Mammary epithelial cell (primary cell): ENCODE measurements at regions of chr4 and their contacts with region 1.

Region 1: DNA sequence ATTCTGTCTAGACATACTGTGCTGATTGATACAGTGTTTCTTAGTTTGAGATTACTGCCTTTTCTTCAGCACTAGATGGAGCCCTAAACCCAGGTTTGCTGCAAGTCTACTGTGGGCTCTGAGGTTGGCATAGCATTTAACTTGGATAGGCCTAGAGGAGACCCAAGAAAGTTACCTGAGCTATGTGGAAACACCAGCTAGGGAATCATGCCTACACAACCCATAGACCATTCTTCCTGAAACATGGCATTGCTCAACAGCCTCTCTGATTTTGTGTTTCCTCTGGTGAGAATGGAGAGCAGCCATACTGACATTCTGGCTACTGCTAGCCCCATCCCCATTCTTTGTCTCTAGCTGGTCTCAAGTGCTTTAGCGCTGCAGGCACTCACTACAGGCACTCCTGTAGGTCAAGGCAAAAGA is 287.7 kb upstream of the PCDH18 start:
- DNase-seq: peak; percentile 57
- H3K4me3 ChIP-seq: no peak overlapping the region
- H3K27ac ChIP-seq: no peak overlapping the region
- H3K4me1 ChIP-seq: peaks cover 3% of the 10 kb centered on the region
- H3K27me3 ChIP-seq: no peaks in the 10 kb centered on the region
- CTCF ChIP-seq: peak; percentile 78 to 83

Region 2: DNA sequence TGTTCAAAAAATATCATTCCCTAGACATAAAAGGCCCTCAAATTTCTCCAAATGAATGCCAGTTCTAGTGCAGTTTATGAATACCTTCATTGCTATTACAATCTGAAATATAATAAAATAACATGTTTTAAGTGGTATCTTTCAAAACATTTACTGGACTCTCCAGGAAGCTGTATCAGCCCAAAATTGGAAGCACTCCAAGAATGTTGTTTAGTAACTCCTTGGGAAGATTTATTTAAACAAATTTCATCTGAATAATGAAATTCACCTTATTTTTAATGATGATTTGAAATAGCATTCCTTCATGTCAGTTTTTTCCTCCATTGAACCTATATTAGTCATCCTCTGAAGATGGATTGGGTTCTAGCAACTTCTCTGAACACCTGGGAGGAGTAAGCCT is 70.5 kb before region 1 on chr4:
- CTCF ChIA-PET with region 1: no interaction called
- dilution Hi-C with region 1: no loop called
- in situ Hi-C with region 1: no loop called
- intact Hi-C with region 1: no loop called
- DNase-seq: no peak
- H3K4me3 ChIP-seq: no peak overlapping the region
- H3K27ac ChIP-seq: no peak overlapping the region
- H3K4me1 ChIP-seq: no peaks in the 10 kb centered on the region
- H3K27me3 ChIP-seq: no peaks in the 10 kb centered on the region
- CTCF ChIP-seq: no peak

Region 3: GRCh38 chr4:137861682-137862081 is 41.7 kb after region 1 on chr4:
- CTCF ChIA-PET with region 1: no interaction called
- dilution Hi-C with region 1: no loop called
- in situ Hi-C with region 1: no loop called
- intact Hi-C with region 1: loop called (anchors 2 kb)
- DNase-seq: no peak
- H3K4me3 ChIP-seq: no peak overlapping the region
- H3K27ac ChIP-seq: no peak overlapping the region
- H3K4me1 ChIP-seq: no peaks in the 10 kb centered on the region
- H3K27me3 ChIP-seq: no peaks in the 10 kb centered on the region
- CTCF ChIP-seq: peak; percentile 45

Region 4: DNA sequence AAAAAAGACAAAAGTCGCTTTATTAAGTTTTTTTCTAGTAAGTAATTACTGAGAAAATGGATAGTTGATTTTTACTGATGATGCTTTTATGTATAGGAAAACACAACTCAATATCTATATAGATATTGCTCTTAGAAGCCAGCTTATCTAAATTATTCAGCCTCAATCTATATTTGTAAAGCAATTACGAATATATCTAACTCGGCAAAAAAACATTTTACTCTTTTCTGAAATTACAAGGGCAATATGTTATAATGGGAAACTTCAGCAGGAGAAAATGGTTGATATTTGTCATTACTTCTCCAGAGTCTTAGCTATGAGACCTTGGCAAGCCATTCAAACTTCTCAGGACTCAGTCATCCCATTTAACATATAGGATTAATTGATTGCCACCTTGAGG is 193.7 kb after region 1 on chr4:
- CTCF ChIA-PET with region 1: no interaction called
- dilution Hi-C with region 1: no loop called
- in situ Hi-C with region 1: no loop called
- intact Hi-C with region 1: loop called (anchors 1 kb)
- DNase-seq: no peak
- H3K4me3 ChIP-seq: no peak overlapping the region
- H3K27ac ChIP-seq: no peak overlapping the region
- H3K4me1 ChIP-seq: peaks cover 3% of the 10 kb centered on the region
- H3K27me3 ChIP-seq: no peaks in the 10 kb centered on the region
- CTCF ChIP-seq: peak in 1 of 2 donors; percentile 7

Region 5: GRCh38 chr4:138090150-138090917 is 270.4 kb after region 1 on chr4:
- CTCF ChIA-PET with region 1: no interaction called
- dilution Hi-C with region 1: no loop called
- in situ Hi-C with region 1: loop called in 1 of 2 experiments (anchors 25 kb)
- intact Hi-C with region 1: loop called (anchors 1 kb)
- DNase-seq: peak; percentile 75
- H3K4me3 ChIP-seq: peak overlapping the region; percentile 13 to 26 (median 13)
- H3K27ac ChIP-seq: no peak overlapping the region
- H3K4me1 ChIP-seq: peaks cover 5% of the 10 kb centered on the region
- H3K27me3 ChIP-seq: no peaks in the 10 kb centered on the region
- CTCF ChIP-seq: peak; percentile 67 to 71

Region 6: GRCh38 chr4:138522366-138522765 is 702.4 kb after region 1 on chr4:
- CTCF ChIA-PET with region 1: interaction called, 4 read pairs
- dilution Hi-C with region 1: no loop called
- in situ Hi-C with region 1: no loop called
- intact Hi-C with region 1: loop called (anchors 1 kb)
- DNase-seq: peak; percentile 30
- H3K4me3 ChIP-seq: no peak overlapping the region
- H3K27ac ChIP-seq: no peak overlapping the region
- H3K4me1 ChIP-seq: no peaks in the 10 kb centered on the region
- H3K27me3 ChIP-seq: no peaks in the 10 kb centered on the region
- CTCF ChIP-seq: peak; percentile 44 to 73

Region 7: DNA sequence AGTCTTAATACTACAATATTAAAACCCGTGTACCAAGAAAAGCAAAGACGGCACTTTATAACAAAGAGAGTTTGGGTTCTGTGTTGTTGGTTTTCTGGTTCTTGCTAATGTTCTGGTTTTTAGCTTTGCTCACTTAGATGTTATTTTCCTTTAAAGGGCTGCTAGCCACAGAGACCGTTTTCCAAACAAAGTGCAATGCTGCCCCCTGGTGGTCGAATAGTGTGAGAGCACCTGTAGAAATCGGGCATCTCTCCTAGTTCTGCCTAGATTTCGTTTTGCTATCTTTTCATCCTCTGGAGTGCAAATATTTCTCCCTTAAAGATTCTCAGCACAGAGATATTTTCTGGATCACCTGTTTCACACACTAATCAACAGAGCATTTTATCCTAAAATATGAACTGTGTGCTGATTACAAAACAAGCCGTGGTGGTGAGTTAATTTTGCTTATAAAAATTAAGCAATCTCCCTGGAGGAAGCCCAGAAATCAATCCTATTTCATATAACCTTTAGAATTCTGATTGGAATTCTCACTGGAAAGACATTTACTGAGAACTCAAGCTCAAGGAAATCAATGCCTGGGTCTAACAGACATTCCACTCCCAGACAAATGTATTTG is 861.1 kb after region 1 on chr4:
- CTCF ChIA-PET with region 1: no interaction called
- dilution Hi-C with region 1: no loop called
- in situ Hi-C with region 1: no loop called
- intact Hi-C with region 1: loop called (anchors 1 kb)
- DNase-seq: peak; percentile 49
- H3K4me3 ChIP-seq: no peak overlapping the region
- H3K27ac ChIP-seq: no peak overlapping the region
- H3K4me1 ChIP-seq: no peaks in the 10 kb centered on the region
- H3K27me3 ChIP-seq: no peaks in the 10 kb centered on the region
- CTCF ChIP-seq: peak; percentile 81 to 83

Region 8: GRCh38 chr4:139223682-139224317 is 1403.8 kb after region 1 on chr4:
- CTCF ChIA-PET with region 1: no interaction called
- dilution Hi-C with region 1: no loop called
- in situ Hi-C with region 1: no loop called
- intact Hi-C with region 1: no loop called
- DNase-seq: peak; percentile 77
- H3K4me3 ChIP-seq: no peak overlapping the region
- H3K27ac ChIP-seq: no peak overlapping the region
- H3K4me1 ChIP-seq: peaks cover 5% of the 10 kb centered on the region
- H3K27me3 ChIP-seq: no peaks in the 10 kb centered on the region
- CTCF ChIP-seq: no peak